CD8-positive, alpha-beta T cell (primary cell): ENCODE measurements at regions of chr11 and their contacts with region 1.

Region 1: DNA sequence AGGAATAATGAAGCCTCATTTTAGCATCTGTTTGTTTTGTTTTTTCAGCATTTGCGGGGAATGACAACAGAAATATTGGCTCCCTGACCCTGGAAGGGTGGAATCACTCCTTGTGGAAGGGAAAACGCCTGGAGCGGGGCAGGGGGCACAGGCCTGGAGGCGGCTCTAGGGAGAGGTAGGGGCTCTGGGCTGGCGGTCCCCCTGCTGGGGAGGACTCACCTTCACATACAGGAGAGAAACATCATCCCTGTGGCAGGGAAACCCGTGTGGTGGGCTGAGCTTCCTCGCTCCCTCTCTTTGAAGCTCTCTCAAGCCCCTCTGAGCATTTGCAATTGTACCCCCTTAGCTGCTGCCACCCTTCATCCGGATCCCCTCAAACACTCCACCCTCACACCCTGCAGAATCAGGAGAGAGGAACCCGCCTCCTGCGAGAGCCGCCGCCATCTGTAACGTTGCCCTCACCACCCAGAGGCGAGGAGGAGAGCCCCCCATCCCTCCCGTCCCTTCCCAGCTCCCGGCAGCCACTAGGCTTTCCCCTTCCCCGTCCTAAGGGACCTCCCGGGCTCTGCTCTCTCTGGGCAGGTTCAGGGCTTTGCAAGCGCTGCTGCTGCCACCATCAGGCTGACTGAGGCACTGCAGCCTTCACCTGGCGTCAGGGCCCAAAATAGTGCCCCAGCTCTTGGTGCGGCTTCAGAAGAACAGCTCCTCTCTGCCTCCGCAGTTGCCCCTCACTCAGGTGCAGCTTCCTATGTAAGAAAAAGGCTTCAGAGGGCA is 10.4 kb downstream of the KIRREL3 start:
- DNase-seq: peak; percentile 10 to 59 (median 38)
- ATAC-seq: no peak
- H3K4me3 ChIP-seq: no peak overlapping the region
- H3K4me3 Mint-ChIP-seq: no peak overlapping the region
- H3K27ac ChIP-seq: no peak overlapping the region
- H3K27ac Mint-ChIP-seq: no peak overlapping the region
- H3K4me1 ChIP-seq: no peaks in the 10 kb centered on the region
- H3K4me1 Mint-ChIP-seq: no peaks in the 10 kb centered on the region
- H3K27me3 ChIP-seq: no peaks in the 10 kb centered on the region
- H3K27me3 Mint-ChIP-seq: peaks cover 23% of the 10 kb centered on the region
- CTCF ChIP-seq: peak; percentile 64

Region 2: DNA sequence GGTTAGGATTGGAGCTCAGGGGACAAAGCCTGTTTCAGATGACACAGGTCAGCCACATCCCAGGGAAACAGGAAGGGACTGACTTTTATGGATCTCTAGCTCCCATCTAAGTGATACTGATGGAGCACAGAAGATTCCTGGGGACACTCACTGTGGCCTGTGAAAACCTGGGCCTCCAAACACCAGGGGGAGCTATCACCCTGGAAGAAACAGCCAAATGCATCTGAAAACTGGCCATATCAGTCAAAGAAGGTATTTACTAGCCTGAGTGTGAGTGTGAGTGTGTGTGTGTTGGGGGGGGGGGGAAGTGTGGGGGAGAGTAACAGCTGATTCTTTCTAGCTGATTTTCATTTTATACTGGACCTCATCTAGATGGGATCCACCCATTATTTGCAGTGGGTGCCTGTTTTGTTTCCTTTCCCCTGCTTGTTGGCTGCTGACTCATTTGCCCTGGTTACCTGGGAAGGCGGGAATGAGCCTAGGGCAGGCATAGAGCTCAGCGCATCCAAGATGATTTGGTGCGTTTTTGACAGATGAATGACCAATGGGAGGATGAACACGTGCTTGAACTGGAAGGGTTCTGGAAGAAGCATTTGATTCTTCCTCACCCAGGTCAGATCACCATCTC is 273.6 kb before region 1 on chr11:
- CTCF ChIA-PET with region 1: interaction called, 5 read pairs
- POLR2A ChIA-PET with region 1: no interaction called
- intact Hi-C with region 1: loop called in 1 of 2 experiments (anchors 2 kb)
- DNase-seq: peak in 3 of 9 experiments; percentile 17 to 35 (median 17)
- ATAC-seq: no peak
- H3K4me3 ChIP-seq: no peak overlapping the region
- H3K4me3 Mint-ChIP-seq: no peak overlapping the region
- H3K27ac ChIP-seq: no peak overlapping the region
- H3K27ac Mint-ChIP-seq: no peak overlapping the region
- H3K4me1 ChIP-seq: no peaks in the 10 kb centered on the region
- H3K4me1 Mint-ChIP-seq: no peaks in the 10 kb centered on the region
- H3K27me3 ChIP-seq: no peaks in the 10 kb centered on the region
- H3K27me3 Mint-ChIP-seq: peaks cover 20% of the 10 kb centered on the region
- CTCF ChIP-seq: no peak

Region 3: GRCh38 chr11:126978911-126979310 is 11.2 kb before region 1 on chr11:
- CTCF ChIA-PET with region 1: interaction called, 18 read pairs
- POLR2A ChIA-PET with region 1: no interaction called
- intact Hi-C with region 1: no loop called
- DNase-seq: no peak
- ATAC-seq: no peak
- H3K4me3 ChIP-seq: no peak overlapping the region
- H3K4me3 Mint-ChIP-seq: no peak overlapping the region
- H3K27ac ChIP-seq: no peak overlapping the region
- H3K27ac Mint-ChIP-seq: no peak overlapping the region
- H3K4me1 ChIP-seq: no peaks in the 10 kb centered on the region
- H3K4me1 Mint-ChIP-seq: no peaks in the 10 kb centered on the region
- H3K27me3 ChIP-seq: no peaks in the 10 kb centered on the region
- H3K27me3 Mint-ChIP-seq: peaks cover 29% of the 10 kb centered on the region
- CTCF ChIP-seq: no peak